ENCODE measurements at regions of chr10 and their contacts with region 1.

Region 1: GRCh38 chr10:100338434-100339036 is 8.5 kb upstream of the SCD start:
- DNase-seq: peak; percentile 53 to 73 (median 62)
- H3K4me3 ChIP-seq: no peak overlapping the region
- H3K27ac ChIP-seq: no peak overlapping the region
- H3K4me1 ChIP-seq: peaks cover 0 to 24% (median 3%) of the 10 kb centered on the region in 4 experiments
- H3K27me3 ChIP-seq: peaks cover 0 to 9% (median 2%) of the 10 kb centered on the region in 5 experiments

Region 2: GRCh38 chr10:100072514-100072913 is 266.0 kb before region 1 on chr10:
- CTCF ChIA-PET with region 1: no interaction called
- POLR2A ChIA-PET with region 1: no interaction called
- DNase-seq: no peak
- H3K4me3 ChIP-seq: no peak overlapping the region
- H3K27ac ChIP-seq: no peak overlapping the region
- H3K4me1 ChIP-seq: no peaks in the 10 kb centered on the region
- H3K27me3 ChIP-seq: no peaks in the 10 kb centered on the region

Region 3: GRCh38 chr10:100194711-100195110 is 143.8 kb before region 1 on chr10:
- CTCF ChIA-PET with region 1: no interaction called
- POLR2A ChIA-PET with region 1: no interaction called
- DNase-seq: no peak
- H3K4me3 ChIP-seq: no peak overlapping the region
- H3K27ac ChIP-seq: no peak overlapping the region
- H3K4me1 ChIP-seq: peaks cover 0 to 7% (median 0%) of the 10 kb centered on the region in 4 experiments
- H3K27me3 ChIP-seq: no peaks in the 10 kb centered on the region

Region 4: DNA sequence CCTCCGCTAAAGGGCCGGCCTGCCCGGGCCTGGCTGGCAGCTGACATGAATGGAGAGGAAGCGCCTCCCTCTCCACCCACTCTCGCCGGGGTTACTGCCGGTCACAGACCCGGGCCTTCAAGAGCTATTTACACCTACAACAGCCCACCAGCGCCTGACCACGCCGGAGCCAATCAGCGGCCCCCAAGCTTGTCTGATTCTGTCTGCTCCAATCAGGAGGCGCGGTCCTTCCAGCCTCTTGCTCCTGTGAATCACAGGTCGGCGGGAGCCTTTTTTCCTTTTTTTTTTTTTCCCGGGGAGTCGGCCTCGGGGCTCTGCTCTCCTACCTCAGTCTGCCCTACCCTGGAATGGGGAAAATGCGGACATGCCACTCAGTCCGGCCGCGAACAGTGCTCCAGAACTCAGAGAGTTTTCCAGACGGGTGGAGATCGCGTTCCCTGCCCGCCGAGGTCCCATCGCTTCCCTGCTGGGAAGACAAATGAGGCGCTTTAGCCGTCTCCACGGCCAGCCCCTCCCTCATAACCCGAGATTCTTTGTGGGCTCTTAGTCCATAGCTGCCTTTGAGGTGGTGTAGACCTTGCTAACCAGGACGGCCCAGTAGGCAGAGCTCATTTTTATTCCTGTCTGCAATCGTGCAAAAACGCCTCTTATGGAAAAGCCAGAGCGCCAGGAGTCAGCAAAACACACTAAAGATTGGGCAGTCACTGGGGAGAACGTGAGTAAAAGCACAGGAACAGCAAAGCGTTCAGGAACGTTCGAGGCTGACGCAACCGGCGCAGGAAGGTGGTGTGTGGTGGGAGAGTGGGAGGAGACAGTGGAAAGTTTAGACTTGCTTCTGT is 35.0 kb after region 1 on chr10:
- CTCF ChIA-PET with region 1: interaction called, 13 read pairs
- POLR2A ChIA-PET with region 1: no interaction called
- DNase-seq: peak; percentile 90 to 93 (median 92)
- H3K4me3 ChIP-seq: peak overlapping the region; percentile 39 to 91 (median 78)
- H3K27ac ChIP-seq: peak overlapping the region; percentile 91 to 95
- H3K4me1 ChIP-seq: peaks cover 14 to 72% (median 51%) of the 10 kb centered on the region in 4 experiments
- H3K27me3 ChIP-seq: no peaks in the 10 kb centered on the region

Region 5: DNA sequence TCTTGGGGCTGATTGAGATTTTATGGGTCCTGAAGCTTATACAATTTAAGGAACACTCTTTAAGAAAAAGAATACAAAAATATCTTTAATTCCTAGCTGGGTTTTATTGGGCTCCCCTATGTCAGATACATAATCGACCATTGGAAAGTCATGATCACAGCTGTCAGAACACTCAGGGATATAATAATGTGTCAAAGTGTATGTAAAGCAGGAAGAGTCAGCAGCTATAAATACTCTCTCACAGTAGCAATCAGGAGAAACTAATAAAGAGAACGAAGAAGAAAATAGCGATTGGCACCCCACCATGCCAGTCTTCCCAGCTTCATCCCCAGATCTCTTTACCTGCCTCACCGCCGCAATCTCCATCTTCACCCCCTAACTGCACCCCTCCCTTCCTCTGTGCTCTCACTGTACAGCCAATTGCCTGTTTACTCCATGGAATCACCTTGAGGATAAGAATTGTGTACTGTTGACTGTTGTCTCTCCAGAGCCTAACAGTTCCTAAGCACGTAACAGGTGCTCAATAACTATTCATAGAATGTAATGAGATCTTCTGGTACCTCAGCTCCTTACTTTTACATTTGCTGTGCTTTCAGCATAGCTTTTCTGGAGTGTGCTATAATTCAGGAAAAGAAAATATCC is 100.3 kb after region 1 on chr10:
- CTCF ChIA-PET with region 1: interaction called, 247 read pairs
- POLR2A ChIA-PET with region 1: no interaction called
- DNase-seq: no peak
- H3K4me3 ChIP-seq: no peak overlapping the region
- H3K27ac ChIP-seq: no peak overlapping the region
- H3K4me1 ChIP-seq: no peaks in the 10 kb centered on the region
- H3K27me3 ChIP-seq: peaks cover 0 to 2% (median 0%) of the 10 kb centered on the region in 5 experiments